ENCODE measurements at regions of chr22 and their contacts with region 1.

Region 1: GRCh38 chr22:47110791-47111443 is 348.5 kb downstream of the TBC1D22A start:
- DNase-seq: peak; percentile 53

Region 2: DNA sequence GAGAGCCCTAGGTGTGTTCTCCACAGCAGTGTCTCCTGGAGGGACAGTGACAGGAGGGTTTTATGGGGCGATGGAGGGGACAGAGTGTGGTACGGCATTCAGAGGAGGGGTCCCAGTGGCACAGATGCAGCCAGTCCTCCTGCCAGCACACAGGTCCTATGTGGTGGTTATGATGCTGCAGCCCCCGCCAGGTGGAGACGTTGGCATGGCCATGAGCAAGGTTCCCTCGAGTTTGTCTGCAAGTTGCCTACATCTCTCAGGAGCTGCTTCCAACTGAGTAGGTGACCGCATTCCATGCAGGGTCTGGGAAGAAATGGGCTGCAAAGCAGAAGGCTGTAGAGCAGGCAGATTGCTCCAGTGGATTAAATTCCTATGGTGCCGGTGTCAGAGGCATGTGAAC is 297.5 kb after region 1 on chr22:
- intact Hi-C with region 1: loop called (anchors 10 kb)
- DNase-seq: peak; percentile 55